ENCODE measurements at regions of chr7 and their contacts with region 1.

Region 1: DNA sequence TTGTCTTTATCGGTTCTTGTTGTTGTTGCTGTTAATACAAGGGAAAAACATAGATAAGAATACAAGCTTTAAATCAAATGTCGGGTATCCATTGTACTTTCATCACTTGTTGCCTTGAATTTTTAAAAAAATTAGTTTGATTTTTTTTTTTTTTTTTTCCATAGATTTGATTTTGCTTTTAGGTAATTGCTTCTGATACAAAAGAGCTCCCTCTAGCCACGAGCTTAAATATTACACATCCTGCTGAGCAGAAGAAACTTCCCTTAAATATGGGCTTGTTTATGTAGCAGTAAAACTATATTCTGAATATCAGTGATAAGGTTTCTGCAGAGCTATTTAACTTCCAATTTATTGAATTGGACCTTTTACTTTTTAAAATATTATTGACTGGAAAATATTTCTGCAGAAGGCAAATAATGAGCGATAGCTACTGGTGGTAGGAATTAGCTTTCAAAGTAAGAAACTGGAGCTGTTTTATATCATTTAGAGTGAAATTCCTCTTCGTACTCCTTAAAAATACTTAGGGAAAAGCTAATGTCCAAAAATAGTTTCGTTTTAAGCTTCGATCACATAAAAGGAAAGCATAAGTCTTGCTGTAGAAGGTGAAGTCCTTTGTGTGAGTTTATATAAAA is 216.9 kb downstream of the POLR1F start:
- DNase-seq: peak; percentile 66
- ATAC-seq: peak; percentile 64
- H3K4me3 ChIP-seq: no peak overlapping the region
- H3K27ac ChIP-seq: no peak overlapping the region
- H3K4me1 ChIP-seq: no peaks in the 10 kb centered on the region
- H3K27me3 ChIP-seq: no peaks in the 10 kb centered on the region
- CTCF ChIP-seq: peak; percentile 75
- POLR2A ChIP-seq: no peak
- RAD21 ChIP-seq: peak; percentile 55

Region 2: DNA sequence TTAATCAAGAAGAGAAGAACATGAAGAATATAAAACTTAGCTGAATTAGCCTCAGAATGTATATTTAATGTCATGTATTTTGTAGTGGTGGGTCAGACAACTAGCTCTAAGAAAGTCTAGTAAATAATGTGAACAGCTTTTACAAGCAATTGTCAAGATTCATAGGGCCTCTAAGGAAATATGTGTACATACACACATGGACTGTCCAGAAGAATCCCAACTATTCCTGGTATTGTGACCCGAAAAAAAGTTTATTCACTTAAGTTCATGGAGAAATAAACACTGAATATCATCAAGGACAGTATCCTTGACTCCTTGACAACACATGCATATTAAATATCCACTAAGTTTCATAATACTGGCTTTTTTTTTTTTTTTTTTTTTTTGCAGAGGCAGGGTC is 363.1 kb before region 1 on chr7:
- CTCF ChIA-PET with region 1: interaction called, 3 read pairs
- POLR2A ChIA-PET with region 1: interaction called, 10 read pairs
- dilution Hi-C with region 1: no loop called
- in situ Hi-C with region 1: no loop called
- intact Hi-C with region 1: no loop called
- DNase-seq: peak; percentile 34
- ATAC-seq: peak; percentile 80
- H3K4me3 ChIP-seq: no peak overlapping the region
- H3K27ac ChIP-seq: no peak overlapping the region
- H3K4me1 ChIP-seq: no peaks in the 10 kb centered on the region
- H3K27me3 ChIP-seq: peaks cover 2% of the 10 kb centered on the region; the same call in 1 of the 2 replicates
- CTCF ChIP-seq: no peak
- POLR2A ChIP-seq: no peak
- RAD21 ChIP-seq: no peak

Measured in IMR-90 (cell line).